ENCODE measurements at regions of chr16 and their contacts with region 1.

Region 1: GRCh38 chr16:1772736-1773584 is at the starts of genes EME2 and MRPS34:
- DNase-seq: peak; percentile 81
- ATAC-seq: peak; percentile 58
- H3K4me3 Mint-ChIP-seq: peak within 1 kb of the TSS; percentile 87
- H3K27ac Mint-ChIP-seq: peak within 1 kb of the TSS; percentile 89
- H3K4me1 Mint-ChIP-seq: peaks cover 24% of the 10 kb centered on the region
- H3K27me3 Mint-ChIP-seq: no peaks in the 10 kb centered on the region
- CTCF ChIP-seq: peak; percentile 50
- total RNA-seq, gene EME2: 37.1 and 49.9 TPM in 2 replicates
- total RNA-seq, gene MRPS34: 60.9 and 65.1 TPM in 2 replicates

Region 2: GRCh38 chr16:1331712-1332617 is 441.0 kb before region 1 on chr16:
- CTCF ChIA-PET with region 1: no interaction called
- POLR2A ChIA-PET with region 1: no interaction called
- intact Hi-C with region 1: no loop called
- DNase-seq: peak; percentile 59
- ATAC-seq: peak; percentile 64
- H3K4me3 Mint-ChIP-seq: peak overlapping the region; percentile 78
- H3K27ac Mint-ChIP-seq: peak overlapping the region; percentile 86
- H3K4me1 Mint-ChIP-seq: peaks cover 36% of the 10 kb centered on the region
- H3K27me3 Mint-ChIP-seq: peaks cover 7% of the 10 kb centered on the region
- CTCF ChIP-seq: no peak

Region 3: GRCh38 chr16:1342526-1343427 is 430.2 kb before region 1 on chr16:
- CTCF ChIA-PET with region 1: no interaction called
- POLR2A ChIA-PET with region 1: no interaction called
- intact Hi-C with region 1: loop called (anchors 5 kb)
- DNase-seq: peak; percentile 87
- ATAC-seq: peak; percentile 90
- H3K4me3 Mint-ChIP-seq: peak overlapping the region; percentile 75
- H3K27ac Mint-ChIP-seq: peak overlapping the region; percentile 50
- H3K4me1 Mint-ChIP-seq: peaks cover 20% of the 10 kb centered on the region
- H3K27me3 Mint-ChIP-seq: no peaks in the 10 kb centered on the region
- CTCF ChIP-seq: no peak

Region 4: DNA sequence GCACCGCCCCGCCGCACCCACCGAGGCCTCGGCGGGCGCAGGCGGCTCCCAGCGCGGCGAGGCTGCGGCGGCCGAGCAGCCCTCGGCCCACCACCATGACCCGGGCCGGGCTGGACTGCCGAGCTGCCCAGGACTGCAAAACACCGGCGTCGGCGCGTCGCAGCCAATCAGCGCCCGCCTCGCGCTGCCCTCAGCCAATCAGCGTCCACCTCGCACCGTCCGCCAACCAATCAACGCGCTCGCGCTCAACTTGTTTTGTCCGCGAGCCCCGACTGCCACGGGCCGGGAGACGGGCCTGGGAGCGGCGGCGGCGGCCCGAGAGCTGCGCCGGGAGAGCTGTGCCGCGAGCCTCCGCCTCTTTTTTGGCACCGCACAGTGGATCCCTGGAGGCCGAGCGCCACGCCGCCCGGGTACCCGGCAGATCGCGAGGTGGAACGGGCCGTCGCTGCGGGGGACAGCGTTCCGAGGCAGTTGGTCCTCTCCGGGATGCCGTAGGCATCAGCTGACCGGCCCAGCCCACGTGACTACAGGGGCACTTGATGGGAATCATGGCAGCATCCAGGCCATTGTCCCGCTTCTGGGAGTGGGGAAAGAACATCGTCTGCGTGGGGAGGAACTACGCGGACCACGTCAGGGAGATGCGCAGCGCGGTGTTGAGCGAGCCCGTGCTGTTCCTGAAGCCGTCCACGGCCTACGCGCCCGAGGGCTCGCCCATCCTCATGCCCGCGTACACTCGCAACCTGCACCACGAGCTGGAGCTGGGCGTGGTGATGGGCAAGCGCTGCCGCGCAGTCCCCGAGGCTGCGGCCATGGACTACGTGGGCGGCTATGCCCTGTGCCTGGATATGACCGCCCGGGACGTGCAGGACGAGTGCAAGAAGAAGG is 54.0 kb after region 1 on chr16 and contains the starts of genes FAHD1 and HAGH:
- CTCF ChIA-PET with region 1: no interaction called
- POLR2A ChIA-PET with region 1: interaction called, 7 read pairs
- intact Hi-C with region 1: loop called (anchors 1 kb)
- DNase-seq: peak; percentile 95
- ATAC-seq: peak; percentile 88
- H3K4me3 Mint-ChIP-seq: peak within 1 kb of the TSS; percentile 94
- H3K27ac Mint-ChIP-seq: peak within 1 kb of the TSS; percentile 91
- H3K4me1 Mint-ChIP-seq: peaks cover 39% of the 10 kb centered on the region
- H3K27me3 Mint-ChIP-seq: no peaks in the 10 kb centered on the region
- CTCF ChIP-seq: no peak
- total RNA-seq, gene FAHD1: 10.2 and 10.4 TPM in 2 replicates
- total RNA-seq, gene HAGH: 19.0 and 19.5 TPM in 2 replicates

Region 5: DNA sequence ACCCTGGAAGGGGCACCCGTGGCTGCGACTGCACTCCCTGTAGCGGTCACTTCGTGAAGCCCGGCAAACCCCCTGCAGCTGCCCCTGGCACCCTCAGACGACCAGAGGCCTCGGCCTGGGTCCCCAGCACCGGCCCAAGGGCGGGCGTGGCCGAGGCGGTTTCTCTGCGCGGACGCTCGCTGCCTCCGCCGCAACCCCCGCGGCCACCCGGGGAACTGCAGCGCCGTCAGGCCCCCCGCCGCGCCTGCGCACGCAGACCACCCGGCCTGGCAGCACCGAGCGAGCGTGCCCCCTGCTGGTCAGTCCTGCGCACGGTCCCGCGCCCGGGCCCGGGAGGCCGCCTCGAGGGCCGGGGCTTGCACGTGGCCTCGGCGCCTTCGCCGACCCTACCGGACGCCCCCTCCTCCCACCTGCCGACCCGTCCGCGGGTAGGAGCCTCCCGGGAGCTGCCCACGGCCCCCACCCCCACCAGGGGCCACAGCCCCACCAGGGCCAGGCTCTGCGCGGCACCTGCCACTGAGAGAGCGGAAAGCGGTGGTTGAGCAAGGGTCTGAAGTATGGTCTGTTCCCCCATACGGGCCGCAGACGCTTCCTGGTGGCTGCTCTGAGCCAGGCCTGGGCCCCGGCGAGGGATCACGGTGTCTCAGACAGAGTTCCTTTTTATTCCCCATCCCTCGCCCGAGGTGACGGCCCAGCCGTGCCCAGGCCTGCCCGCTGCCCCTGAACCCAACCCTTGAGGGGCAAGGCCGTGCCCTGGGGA is 156.8 kb after region 1 on chr16:
- CTCF ChIA-PET with region 1: no interaction called
- POLR2A ChIA-PET with region 1: no interaction called
- intact Hi-C with region 1: loop called (anchors 2 kb)
- DNase-seq: peak; percentile 97
- ATAC-seq: peak; percentile 98
- H3K4me3 Mint-ChIP-seq: peak overlapping the region; percentile 64
- H3K27ac Mint-ChIP-seq: no peak overlapping the region
- H3K4me1 Mint-ChIP-seq: peaks cover 2% of the 10 kb centered on the region
- H3K27me3 Mint-ChIP-seq: peaks cover 6% of the 10 kb centered on the region
- CTCF ChIP-seq: peak; percentile 92